ENCODE measurements at regions of chr16 and their contacts with region 1.

Region 1: DNA sequence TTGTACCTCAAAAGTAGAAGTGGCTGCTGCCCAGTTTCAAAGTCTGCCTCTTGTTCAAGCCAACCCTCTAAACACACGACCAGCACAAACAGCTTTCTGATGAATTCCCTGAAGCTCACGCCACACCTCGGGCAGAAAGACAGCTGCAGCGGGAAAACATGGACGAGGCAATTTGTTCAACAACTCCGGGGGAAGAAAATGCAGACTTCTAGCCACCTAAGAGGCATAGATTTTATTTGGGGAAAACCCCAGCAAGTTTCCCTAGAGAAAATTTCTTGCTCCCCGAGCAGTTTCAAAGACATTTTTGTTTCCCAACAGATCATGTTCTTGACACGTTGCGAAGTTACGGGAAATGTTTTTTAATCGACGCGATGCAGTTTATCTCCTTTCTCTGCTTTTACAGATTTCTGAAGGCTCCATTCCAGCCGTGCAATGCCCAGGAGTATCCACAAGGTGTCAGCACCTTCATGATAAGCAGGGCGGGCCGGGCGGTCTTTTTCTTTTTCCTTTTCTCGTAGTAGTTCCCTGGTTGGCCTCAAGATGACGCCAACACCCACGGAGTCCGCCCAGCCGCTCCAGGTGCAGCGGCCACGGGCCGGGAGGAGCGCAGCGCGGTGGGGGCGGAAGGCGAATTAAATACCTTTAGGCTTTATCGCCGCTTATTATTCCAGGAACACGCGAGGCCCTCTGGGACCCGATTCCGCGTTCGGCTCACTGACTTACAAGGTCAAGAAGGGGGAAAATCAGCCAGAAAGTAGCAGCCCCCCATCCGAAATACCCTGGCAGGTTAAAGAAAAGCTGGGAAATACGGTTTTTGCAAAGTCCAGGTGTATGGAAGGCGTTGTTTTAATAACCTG is 2.9 kb upstream of the FOXC2 start:
- DNase-seq: peak; percentile 50 to 86
- ATAC-seq: peak; percentile 51 to 87; a peak in 5 of 6 replicates
- H3K4me3 ChIP-seq: peak overlapping the region; percentile 42
- H3K27ac ChIP-seq: peak overlapping the region; percentile 71 to 79
- H3K4me1 ChIP-seq: peaks cover 9% of the 10 kb centered on the region; the same call in 1 of the 3 replicates
- CTCF ChIP-seq: peak; percentile 100
- EP300 ChIP-seq: no peak
- POLR2A ChIP-seq: no peak
- RAD21 ChIP-seq: peak; percentile 100

Region 2: DNA sequence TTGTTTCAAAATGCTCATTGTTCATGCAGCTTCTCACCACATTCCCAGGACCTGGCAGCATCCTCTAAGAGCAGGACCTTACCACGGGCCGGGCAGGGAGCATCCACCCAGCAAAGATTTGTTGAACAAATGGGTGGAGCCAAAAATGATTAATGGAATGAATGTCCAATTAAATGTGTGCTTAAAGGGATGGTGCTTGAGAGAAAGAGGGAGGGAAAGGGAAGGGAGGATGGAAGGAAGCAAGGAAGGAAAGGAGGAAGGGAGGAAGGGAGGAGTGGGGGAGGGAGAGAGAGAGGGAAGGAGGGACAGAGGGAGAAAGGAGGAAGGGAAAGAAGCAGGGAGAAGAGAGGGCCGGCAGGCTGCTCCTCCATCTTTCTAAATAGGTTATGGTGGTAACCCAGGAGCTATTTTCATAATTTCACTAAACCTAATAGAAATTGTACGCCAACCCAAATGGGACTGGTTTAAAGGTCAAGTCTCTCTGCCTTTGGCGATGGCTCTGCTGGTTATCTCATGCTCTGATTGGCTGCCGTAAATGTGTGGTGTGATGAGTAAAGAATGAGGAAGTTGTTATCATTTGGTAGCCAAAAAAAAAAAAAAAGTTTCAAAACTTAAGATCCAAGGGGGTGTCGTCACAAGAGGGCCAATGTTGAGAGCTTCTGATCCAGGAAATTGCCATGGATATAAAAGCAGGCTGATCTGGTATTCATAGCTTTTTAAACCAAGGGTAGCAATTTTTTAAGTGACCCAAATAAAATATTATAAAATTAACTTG is 180.0 kb before region 1 on chr16:
- CTCF ChIA-PET with region 1: no interaction called
- POLR2A ChIA-PET with region 1: no interaction called
- DNase-seq: peak; percentile 25 to 60
- ATAC-seq: peak; percentile 15 to 46; a peak in 4 of 6 replicates
- H3K4me3 ChIP-seq: no peak overlapping the region
- H3K27ac ChIP-seq: no peak overlapping the region
- H3K4me1 ChIP-seq: peaks cover 13% of the 10 kb centered on the region; the same call in 1 of the 3 replicates
- CTCF ChIP-seq: no peak
- EP300 ChIP-seq: no peak
- POLR2A ChIP-seq: no peak
- RAD21 ChIP-seq: no peak

Region 3: DNA sequence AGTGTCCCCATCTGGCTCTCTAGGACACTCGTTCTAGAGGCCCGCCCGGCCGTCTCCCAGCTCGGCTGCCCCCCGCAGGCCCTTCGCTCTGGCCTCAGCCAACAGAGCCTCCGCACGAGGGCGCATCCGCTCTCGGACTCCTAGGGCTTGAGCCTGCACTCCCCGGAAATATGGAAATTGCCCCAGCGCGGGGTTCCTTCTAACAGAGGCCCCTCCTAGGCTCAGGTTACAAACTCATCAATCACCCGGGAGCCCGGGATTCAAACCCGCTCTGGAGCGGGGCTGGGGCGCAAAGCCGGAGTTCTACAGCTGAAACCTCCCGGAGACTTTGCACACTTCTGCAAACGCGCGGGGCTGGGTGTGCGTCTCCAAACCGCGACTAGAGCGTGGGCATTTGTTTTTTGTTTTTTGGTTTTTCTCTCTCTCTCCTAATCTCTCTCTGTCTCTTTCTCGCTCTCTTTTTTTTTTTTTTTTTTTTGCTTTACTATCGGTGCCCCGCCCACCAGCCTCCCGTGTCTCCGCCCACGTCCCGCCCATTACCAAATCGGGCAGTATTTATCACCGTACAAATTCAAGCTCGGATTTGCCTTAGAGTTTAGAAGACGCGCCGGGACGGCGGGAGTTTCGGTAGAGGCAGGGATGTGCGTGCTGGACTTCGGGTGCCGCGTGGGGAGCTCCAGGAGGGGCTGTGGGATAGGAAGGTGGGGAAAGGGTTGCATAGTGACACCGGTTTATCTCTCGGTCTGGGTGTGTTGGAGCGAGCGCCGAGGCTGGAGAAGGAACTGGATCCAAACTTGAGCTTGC is 12.2 kb after region 1 on chr16:
- CTCF ChIA-PET with region 1: interaction called, 18 read pairs
- POLR2A ChIA-PET with region 1: no interaction called
- DNase-seq: peak; percentile 67 to 76
- ATAC-seq: peak; percentile 86 to 94
- H3K4me3 ChIP-seq: peak overlapping the region; percentile 59
- H3K27ac ChIP-seq: peak overlapping the region; percentile 71 to 82
- H3K4me1 ChIP-seq: no peaks in the 10 kb centered on the region
- CTCF ChIP-seq: peak; percentile 46; the same call in 2 of the 3 replicates
- EP300 ChIP-seq: no peak
- POLR2A ChIP-seq: peak; percentile 33; the same call in 1 of the 2 replicates
- RAD21 ChIP-seq: peak; percentile 42 to 63

Region 4: GRCh38 chr16:86635176-86635876 is 71.6 kb after region 1 on chr16:
- CTCF ChIA-PET with region 1: interaction called, 11 read pairs
- POLR2A ChIA-PET with region 1: no interaction called
- DNase-seq: no peak
- ATAC-seq: no peak
- H3K4me3 ChIP-seq: no peak overlapping the region
- H3K27ac ChIP-seq: no peak overlapping the region
- H3K4me1 ChIP-seq: peaks cover 11% of the 10 kb centered on the region; the same call in 1 of the 3 replicates
- CTCF ChIP-seq: no peak
- EP300 ChIP-seq: no peak
- POLR2A ChIP-seq: no peak
- RAD21 ChIP-seq: no peak

Region 5: DNA sequence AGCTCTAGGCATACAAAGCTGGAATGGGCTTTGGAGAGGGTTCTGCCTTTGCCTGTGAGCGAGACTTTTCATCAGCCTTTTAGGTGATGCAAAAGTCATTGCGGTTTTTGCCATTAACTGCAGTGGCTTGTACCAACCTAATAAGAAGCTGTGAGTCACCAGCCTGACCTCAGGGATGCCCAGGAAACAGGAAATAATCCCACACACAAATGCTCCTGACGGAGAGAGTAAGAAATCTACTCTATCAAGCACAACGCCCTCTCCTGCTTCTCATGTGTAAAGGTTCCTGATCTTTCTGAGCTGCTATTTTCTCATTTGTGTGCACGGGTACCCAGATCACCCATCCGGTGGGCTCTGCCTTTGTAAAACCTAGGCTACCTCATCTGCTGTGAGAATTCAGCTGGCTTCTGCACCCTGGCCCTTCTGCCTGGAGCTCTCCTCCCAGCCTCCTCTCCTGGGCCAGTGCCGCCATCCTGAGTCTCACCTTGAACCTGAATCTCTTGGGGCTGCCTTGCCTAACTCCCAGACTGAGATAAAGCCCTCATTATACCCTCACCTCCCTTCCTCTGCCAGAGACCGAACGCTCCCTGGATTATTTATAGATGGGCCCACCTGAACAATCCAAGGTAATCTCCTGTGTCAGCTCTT is 453.8 kb after region 1 on chr16:
- CTCF ChIA-PET with region 1: interaction called, 27 read pairs
- POLR2A ChIA-PET with region 1: no interaction called
- DNase-seq: peak; percentile 56 to 84
- ATAC-seq: peak; percentile 84 to 93
- H3K4me3 ChIP-seq: no peak overlapping the region
- H3K27ac ChIP-seq: peak overlapping the region in 1 of 2 experiments; percentile 49; a peak in 2 of 6 replicates
- H3K4me1 ChIP-seq: peaks cover 3% of the 10 kb centered on the region; the same call in 1 of the 3 replicates
- CTCF ChIP-seq: peak; percentile 42
- EP300 ChIP-seq: no peak
- POLR2A ChIP-seq: no peak
- RAD21 ChIP-seq: peak; percentile 48 to 59

Region 6: DNA sequence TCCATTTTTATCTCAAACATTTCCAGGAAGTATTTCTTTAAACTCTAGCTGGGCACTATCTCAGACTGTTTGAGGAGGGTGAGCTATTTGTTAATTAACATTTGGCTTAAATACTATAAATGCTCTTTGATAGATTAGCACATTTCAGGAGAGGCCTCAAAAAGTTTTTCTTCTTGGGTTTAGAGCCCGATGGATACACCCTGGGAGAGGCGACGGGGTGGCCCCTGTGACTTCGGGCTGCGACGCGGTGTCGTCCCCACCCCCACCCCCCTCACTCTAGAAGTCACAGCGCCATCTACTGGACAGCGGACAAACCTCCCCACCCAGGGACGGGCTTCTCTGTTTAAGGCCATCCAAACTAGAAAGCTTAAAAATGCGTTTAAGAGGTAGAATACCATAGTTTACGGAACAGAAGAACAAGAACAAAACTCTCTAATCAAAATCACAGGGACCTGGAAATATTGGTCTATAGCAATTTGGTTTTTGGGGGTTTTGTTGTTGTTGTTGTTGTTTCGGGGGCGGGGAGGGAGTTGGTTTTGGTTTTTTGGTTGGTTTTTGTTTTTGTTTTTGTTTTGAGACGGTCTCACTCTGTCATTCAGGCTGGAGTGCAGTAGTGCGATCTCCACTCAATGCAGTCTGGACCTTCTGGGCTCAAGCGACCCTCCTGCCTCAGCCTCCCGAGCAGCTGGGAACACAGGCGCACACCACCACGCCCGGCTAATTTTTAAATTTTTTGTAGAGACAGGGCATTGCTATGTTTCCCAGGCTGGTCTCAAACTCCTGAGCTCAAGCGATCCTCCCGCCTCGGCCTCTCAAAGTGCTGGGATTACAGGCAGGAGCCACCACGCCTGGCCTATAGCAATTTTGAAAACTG is 499.1 kb after region 1 on chr16:
- CTCF ChIA-PET with region 1: interaction called, 170 read pairs
- POLR2A ChIA-PET with region 1: no interaction called
- DNase-seq: peak; percentile 70 to 91
- ATAC-seq: peak; percentile 92 to 98
- H3K4me3 ChIP-seq: peak overlapping the region; percentile 30; the same call in 2 of the 3 replicates
- H3K27ac ChIP-seq: peak overlapping the region; percentile 58 to 69; a peak in 4 of 6 replicates
- H3K4me1 ChIP-seq: peaks cover 4% of the 10 kb centered on the region; the same call in 1 of the 3 replicates
- CTCF ChIP-seq: peak; percentile 84
- EP300 ChIP-seq: no peak
- POLR2A ChIP-seq: no peak
- RAD21 ChIP-seq: peak; percentile 92 to 98

Region 7: DNA sequence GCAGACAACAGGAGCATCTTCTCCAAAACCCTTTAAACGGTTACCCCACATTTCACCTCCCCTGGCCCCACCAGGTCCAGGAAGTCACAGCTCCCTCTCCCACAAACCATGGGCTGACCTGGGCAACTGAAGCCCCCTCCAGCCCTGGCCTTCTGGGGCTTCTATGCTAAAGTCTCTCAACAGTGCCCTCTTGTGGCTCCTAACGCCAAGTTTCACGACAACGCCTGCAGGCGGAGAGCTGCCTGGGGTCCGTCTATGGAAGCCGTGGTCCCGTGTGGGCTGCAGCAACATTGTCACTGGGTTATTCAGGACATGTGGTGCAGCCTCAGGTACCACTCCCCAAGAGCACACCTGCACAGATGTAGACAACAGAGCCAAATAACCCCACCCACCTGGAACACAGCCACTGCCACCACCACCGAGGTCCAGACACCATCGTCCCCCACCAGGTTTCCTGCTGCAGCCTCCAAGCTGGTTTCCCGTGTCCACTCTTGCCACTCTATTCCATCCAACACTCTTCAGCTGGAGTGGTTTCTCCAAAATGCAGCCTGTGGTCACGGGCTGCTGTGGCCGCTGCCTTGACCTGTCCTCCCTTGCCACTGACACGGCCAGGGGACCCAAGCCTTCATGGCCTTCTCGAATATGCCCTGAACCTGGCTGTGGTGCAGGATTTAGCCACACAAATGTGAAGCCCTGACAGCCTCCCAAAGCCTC is 734.4 kb after region 1 on chr16:
- CTCF ChIA-PET with region 1: interaction called, 12 read pairs
- POLR2A ChIA-PET with region 1: no interaction called
- DNase-seq: peak in 1 of 2 experiments; percentile 68
- ATAC-seq: peak; percentile 46 to 86; a peak in 4 of 6 replicates
- H3K4me3 ChIP-seq: no peak overlapping the region
- H3K27ac ChIP-seq: no peak overlapping the region
- H3K4me1 ChIP-seq: no peaks in the 10 kb centered on the region
- CTCF ChIP-seq: peak; percentile 60
- EP300 ChIP-seq: no peak
- POLR2A ChIP-seq: no peak
- RAD21 ChIP-seq: peak; percentile 36 to 50